ENCODE measurements at regions of chr7 and their contacts with region 1.

Region 1: DNA sequence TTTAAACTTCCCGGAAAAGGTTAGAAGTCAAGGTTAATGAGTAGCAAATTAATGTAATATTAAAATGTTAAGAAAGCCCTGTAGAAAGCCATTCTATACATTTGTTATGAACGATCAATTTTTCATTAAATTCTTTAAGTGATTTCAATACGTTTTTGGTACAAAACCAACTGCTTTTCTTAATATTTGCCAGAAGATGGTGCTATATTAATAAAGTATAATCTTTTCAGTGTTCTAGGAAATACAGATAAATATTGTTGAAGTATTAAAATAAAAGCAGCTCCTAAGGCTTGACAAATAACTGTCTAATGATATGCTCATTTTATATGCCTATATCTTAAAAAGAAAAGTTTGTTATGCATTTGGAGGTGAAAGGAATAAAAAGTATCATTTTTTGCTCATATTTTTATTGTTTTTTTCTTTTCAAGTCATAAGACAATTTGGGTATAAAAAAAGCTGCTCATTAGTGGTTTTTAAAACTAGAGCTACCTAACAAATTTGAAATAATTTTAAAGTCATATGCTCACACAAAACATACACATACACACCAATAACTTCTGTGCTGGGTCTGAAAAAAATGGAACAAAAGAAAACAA is 130.3 kb upstream of the POT1 start:
- DNase-seq: no peak
- H3K4me3 ChIP-seq: no peak overlapping the region
- H3K27ac ChIP-seq: no peak overlapping the region
- H3K4me1 ChIP-seq: no peaks in the 10 kb centered on the region
- H3K27me3 ChIP-seq: no peaks in the 10 kb centered on the region
- CTCF ChIP-seq: no peak; a peak in 1 of 4 replicates
- EP300 ChIP-seq: no peak
- POLR2A ChIP-seq: no peak
- RAD21 ChIP-seq: peak in 1 of 2 experiments; percentile 29; a peak in 2 of 4 replicates

Region 2: DNA sequence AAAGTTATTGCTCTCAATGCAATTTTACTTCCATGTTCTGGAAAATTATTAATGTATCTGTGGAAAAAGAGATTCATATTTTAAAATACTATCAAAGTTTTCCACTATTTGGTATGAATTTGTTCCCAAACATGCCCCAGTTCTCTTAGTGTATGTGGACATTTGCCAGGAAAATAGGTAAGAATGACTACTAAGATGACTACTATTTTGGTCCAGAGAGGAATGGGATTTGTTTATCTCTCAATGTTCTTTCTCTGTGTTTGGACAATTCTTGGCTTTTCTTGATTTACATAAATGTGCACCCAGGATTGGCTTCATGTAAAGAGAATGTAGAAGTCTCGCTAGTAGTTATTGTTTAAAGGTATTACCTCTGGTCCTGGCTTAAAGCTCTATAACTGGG is 70.0 kb before region 1 on chr7:
- CTCF ChIA-PET with region 1: no interaction called
- POLR2A ChIA-PET with region 1: no interaction called
- DNase-seq: no peak
- H3K4me3 ChIP-seq: no peak overlapping the region
- H3K27ac ChIP-seq: no peak overlapping the region
- H3K4me1 ChIP-seq: no peaks in the 10 kb centered on the region
- H3K27me3 ChIP-seq: no peaks in the 10 kb centered on the region
- CTCF ChIP-seq: no peak
- EP300 ChIP-seq: no peak
- POLR2A ChIP-seq: no peak
- RAD21 ChIP-seq: no peak

Region 3: GRCh38 chr7:125316466-125316865 is 256.5 kb after region 1 on chr7:
- CTCF ChIA-PET with region 1: interaction called, 13 read pairs
- POLR2A ChIA-PET with region 1: no interaction called
- DNase-seq: peak; percentile 49 to 68
- H3K4me3 ChIP-seq: no peak overlapping the region
- H3K27ac ChIP-seq: no peak overlapping the region
- H3K4me1 ChIP-seq: peaks cover 0 to 1% (median 0%) of the 10 kb centered on the region in 4 experiments; a peak in 2 of 7 replicates
- H3K27me3 ChIP-seq: no peaks in the 10 kb centered on the region
- CTCF ChIP-seq: peak; percentile 64 to 89 (median 76)
- EP300 ChIP-seq: no peak
- POLR2A ChIP-seq: no peak
- RAD21 ChIP-seq: peak; percentile 96 to 97

Measured in H1 (cell line).